ENCODE measurements at regions of chr5 and their contacts with region 1.

Region 1: GRCh38 chr5:115625579-115626444 is at the start of gene TMED7:
- DNase-seq: peak; percentile 99 to 100 (median 100)
- ATAC-seq: peak; percentile 92
- H3K4me3 ChIP-seq: peak within 1 kb of the TSS; percentile 78 to 94
- H3K4me3 Mint-ChIP-seq: no peak within 1 kb of the TSS
- H3K27ac ChIP-seq: peak within 1 kb of the TSS; percentile 91 to 93
- H3K27ac Mint-ChIP-seq: no peak within 1 kb of the TSS
- H3K4me1 ChIP-seq: peaks cover 37% of the 10 kb centered on the region
- H3K4me1 Mint-ChIP-seq: peaks cover 35% of the 10 kb centered on the region
- H3K27me3 ChIP-seq: no peaks in the 10 kb centered on the region
- H3K27me3 Mint-ChIP-seq: no peaks in the 10 kb centered on the region
- CTCF ChIP-seq: no peak
- total RNA-seq, gene TMED7: 67.2 to 71.5 TPM

Region 2: GRCh38 chr5:115262321-115263077 is 363.3 kb before region 1 on chr5 and contains the start of gene PGGT1B:
- CTCF ChIA-PET with region 1: no interaction called
- POLR2A ChIA-PET with region 1: interaction called, 3 read pairs
- intact Hi-C with region 1: loop called in 1 of 2 experiments (anchors 1 kb)
- DNase-seq: peak; percentile 37 to 83 (median 72)
- ATAC-seq: peak; percentile 94
- H3K4me3 ChIP-seq: peak within 1 kb of the TSS; percentile 82 to 97
- H3K4me3 Mint-ChIP-seq: peak within 1 kb of the TSS; percentile 94
- H3K27ac ChIP-seq: peak within 1 kb of the TSS; percentile 62 to 91
- H3K27ac Mint-ChIP-seq: peak within 1 kb of the TSS; percentile 98
- H3K4me1 ChIP-seq: peaks cover 28% of the 10 kb centered on the region
- H3K4me1 Mint-ChIP-seq: peaks cover 49% of the 10 kb centered on the region
- H3K27me3 ChIP-seq: no peaks in the 10 kb centered on the region
- H3K27me3 Mint-ChIP-seq: no peaks in the 10 kb centered on the region
- CTCF ChIP-seq: no peak
- total RNA-seq, gene PGGT1B: 55.2 to 57.0 TPM

Region 3: GRCh38 chr5:115296124-115297022 is 329.4 kb before region 1 on chr5 and contains the start of gene CCDC112:
- CTCF ChIA-PET with region 1: no interaction called
- POLR2A ChIA-PET with region 1: no interaction called
- intact Hi-C with region 1: loop called in 1 of 2 experiments (anchors 1 kb)
- DNase-seq: peak; percentile 45 to 85 (median 70)
- ATAC-seq: peak; percentile 76
- H3K4me3 ChIP-seq: peak within 1 kb of the TSS; percentile 58 to 65
- H3K4me3 Mint-ChIP-seq: peak within 1 kb of the TSS; percentile 78
- H3K27ac ChIP-seq: no peak within 1 kb of the TSS
- H3K27ac Mint-ChIP-seq: no peak within 1 kb of the TSS
- H3K4me1 ChIP-seq: peaks cover 4% of the 10 kb centered on the region
- H3K4me1 Mint-ChIP-seq: peaks cover 12% of the 10 kb centered on the region
- H3K27me3 ChIP-seq: no peaks in the 10 kb centered on the region
- H3K27me3 Mint-ChIP-seq: no peaks in the 10 kb centered on the region
- CTCF ChIP-seq: no peak
- total RNA-seq, gene CCDC112: 1.6 to 2.7 TPM

Region 4: GRCh38 chr5:115601701-115602590 is 23.9 kb before region 1 on chr5 and contains the start of gene TICAM2:
- CTCF ChIA-PET with region 1: interaction called, 6 read pairs
- POLR2A ChIA-PET with region 1: interaction called, 3 read pairs
- intact Hi-C with region 1: loop called in 1 of 2 experiments (anchors 1 kb)
- DNase-seq: peak; percentile 21 to 78 (median 55)
- ATAC-seq: peak; percentile 82
- H3K4me3 ChIP-seq: peak within 1 kb of the TSS; percentile 56 to 59
- H3K4me3 Mint-ChIP-seq: peak within 1 kb of the TSS; percentile 76
- H3K27ac ChIP-seq: peak within 1 kb of the TSS; percentile 46 to 48
- H3K27ac Mint-ChIP-seq: peak within 1 kb of the TSS; percentile 81
- H3K4me1 ChIP-seq: no peaks in the 10 kb centered on the region
- H3K4me1 Mint-ChIP-seq: peaks cover 28% of the 10 kb centered on the region
- H3K27me3 ChIP-seq: no peaks in the 10 kb centered on the region
- H3K27me3 Mint-ChIP-seq: no peaks in the 10 kb centered on the region
- CTCF ChIP-seq: peak; percentile 30
- total RNA-seq, gene TICAM2: 0.27 to 0.36 TPM

Region 5: DNA sequence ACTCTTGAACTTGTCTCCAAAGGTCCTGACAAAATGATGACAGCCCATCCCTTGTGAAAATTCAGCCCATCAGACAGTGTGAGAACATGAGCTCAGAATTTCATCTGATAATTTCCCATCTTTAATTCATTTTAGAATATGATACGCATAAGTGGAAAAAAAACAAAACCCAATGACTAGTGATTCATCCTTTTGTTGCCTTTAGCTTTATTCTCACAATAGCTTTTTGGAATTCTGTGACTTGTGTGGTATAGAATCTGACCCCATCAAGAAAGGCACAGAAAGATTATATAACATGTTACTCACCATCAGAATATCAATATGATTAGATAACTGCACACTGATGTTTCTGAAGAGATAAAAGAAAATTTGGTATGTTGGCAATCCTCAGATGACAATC is 16.1 kb after region 1 on chr5:
- CTCF ChIA-PET with region 1: no interaction called
- POLR2A ChIA-PET with region 1: no interaction called
- intact Hi-C with region 1: no loop called
- DNase-seq: no peak
- ATAC-seq: no peak
- H3K4me3 ChIP-seq: no peak overlapping the region
- H3K4me3 Mint-ChIP-seq: no peak overlapping the region
- H3K27ac ChIP-seq: no peak overlapping the region
- H3K27ac Mint-ChIP-seq: no peak overlapping the region
- H3K4me1 ChIP-seq: no peaks in the 10 kb centered on the region
- H3K4me1 Mint-ChIP-seq: no peaks in the 10 kb centered on the region
- H3K27me3 ChIP-seq: no peaks in the 10 kb centered on the region
- H3K27me3 Mint-ChIP-seq: peaks cover 14% of the 10 kb centered on the region
- CTCF ChIP-seq: no peak

Region 6: DNA sequence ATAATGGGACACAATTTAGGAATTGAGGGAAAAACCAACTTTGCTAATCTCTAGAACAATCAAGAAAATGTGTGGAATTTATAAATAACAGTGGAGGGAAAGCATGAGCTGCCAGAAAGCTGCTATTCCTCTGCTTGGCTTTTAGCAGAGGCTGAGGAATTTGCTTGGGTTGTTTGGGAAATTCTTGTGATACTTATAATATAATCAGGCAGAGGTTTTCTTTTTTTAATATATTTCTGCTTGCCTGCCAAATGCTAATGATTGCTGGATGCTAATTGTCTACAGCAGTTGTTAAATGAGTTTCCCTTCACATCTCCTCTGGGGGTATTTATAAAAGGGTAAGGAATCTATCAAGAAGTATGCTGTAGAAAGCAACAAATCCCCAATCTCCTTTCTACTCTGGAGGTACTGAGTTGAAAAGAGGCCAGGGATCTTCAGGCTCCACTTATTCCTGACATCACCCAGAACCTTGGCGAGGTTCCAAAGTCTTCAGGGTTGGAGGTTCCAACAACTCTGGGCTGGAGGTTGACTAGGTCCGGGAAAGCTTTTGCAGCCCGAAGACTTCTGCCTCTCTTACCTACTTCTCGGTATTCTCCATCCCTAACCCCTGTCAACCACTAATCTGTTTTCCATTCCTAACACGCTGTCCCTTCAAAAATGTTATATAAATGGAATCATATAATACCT is 60.4 kb after region 1 on chr5:
- CTCF ChIA-PET with region 1: no interaction called
- POLR2A ChIA-PET with region 1: no interaction called
- intact Hi-C with region 1: no loop called
- DNase-seq: no peak
- ATAC-seq: no peak
- H3K4me3 ChIP-seq: no peak overlapping the region
- H3K4me3 Mint-ChIP-seq: no peak overlapping the region
- H3K27ac ChIP-seq: no peak overlapping the region
- H3K27ac Mint-ChIP-seq: no peak overlapping the region
- H3K4me1 ChIP-seq: no peaks in the 10 kb centered on the region
- H3K4me1 Mint-ChIP-seq: no peaks in the 10 kb centered on the region
- H3K27me3 ChIP-seq: no peaks in the 10 kb centered on the region
- H3K27me3 Mint-ChIP-seq: peaks cover 11% of the 10 kb centered on the region
- CTCF ChIP-seq: no peak

Region 7: DNA sequence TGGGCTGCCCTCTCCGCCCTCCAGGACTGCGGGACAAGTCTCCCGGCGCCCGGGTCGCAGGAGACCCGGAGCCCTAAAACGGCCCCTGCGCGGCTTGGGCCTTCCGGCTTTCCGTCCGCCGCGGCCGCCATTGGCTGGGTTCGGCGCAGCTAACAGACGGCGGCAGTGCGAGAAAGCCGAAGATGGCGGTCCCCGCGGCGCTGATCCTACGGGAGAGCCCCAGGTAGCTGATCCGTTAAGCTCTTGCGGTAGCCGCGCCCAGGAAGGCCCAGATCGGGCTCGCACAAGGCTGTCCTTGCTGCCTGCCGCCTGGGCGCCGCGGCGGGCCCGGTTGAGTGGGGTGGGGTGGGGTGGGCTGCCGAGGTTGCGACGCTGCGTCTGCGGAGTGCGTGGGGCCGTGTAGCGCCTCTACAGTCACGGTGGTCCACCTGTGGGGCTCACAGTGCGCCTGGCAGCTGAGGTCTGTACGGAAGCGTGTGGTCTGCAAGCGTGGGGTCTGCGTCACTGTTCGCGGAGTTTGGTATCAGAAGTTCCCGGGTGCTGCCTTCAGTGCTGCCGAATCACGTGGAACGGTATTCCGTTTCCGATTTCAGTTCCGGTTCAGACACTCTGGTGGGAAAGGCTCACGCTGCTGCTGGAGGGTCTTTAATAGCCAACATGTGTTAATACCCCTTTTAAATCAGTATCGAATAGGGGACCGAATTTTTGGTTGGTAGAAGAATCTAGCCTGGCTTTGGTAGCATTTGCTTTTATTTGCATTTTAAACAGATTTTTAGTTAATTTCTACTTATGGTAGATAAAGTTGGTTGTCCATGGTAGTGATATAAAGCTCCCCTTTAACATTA is 459.3 kb after region 1 on chr5 and contains the start of gene COMMD10:
- CTCF ChIA-PET with region 1: interaction called, 3 read pairs
- POLR2A ChIA-PET with region 1: interaction called, 4 read pairs
- intact Hi-C with region 1: loop called (anchors 1 to 2 kb)
- DNase-seq: peak; percentile 67 to 97 (median 85)
- ATAC-seq: peak; percentile 93
- H3K4me3 ChIP-seq: peak within 1 kb of the TSS; percentile 45 to 71
- H3K4me3 Mint-ChIP-seq: peak within 1 kb of the TSS; percentile 91
- H3K27ac ChIP-seq: peak within 1 kb of the TSS; percentile 87 to 96
- H3K27ac Mint-ChIP-seq: peak within 1 kb of the TSS; percentile 96
- H3K4me1 ChIP-seq: peaks cover 18% of the 10 kb centered on the region
- H3K4me1 Mint-ChIP-seq: peaks cover 62% of the 10 kb centered on the region
- H3K27me3 ChIP-seq: no peaks in the 10 kb centered on the region
- H3K27me3 Mint-ChIP-seq: no peaks in the 10 kb centered on the region
- CTCF ChIP-seq: no peak
- total RNA-seq, gene COMMD10: 18.0 to 18.8 TPM

Measured in CD8-positive, alpha-beta T cell (primary cell).